ENCODE measurements at regions of chr11 and their contacts with region 1.

Region 1: DNA sequence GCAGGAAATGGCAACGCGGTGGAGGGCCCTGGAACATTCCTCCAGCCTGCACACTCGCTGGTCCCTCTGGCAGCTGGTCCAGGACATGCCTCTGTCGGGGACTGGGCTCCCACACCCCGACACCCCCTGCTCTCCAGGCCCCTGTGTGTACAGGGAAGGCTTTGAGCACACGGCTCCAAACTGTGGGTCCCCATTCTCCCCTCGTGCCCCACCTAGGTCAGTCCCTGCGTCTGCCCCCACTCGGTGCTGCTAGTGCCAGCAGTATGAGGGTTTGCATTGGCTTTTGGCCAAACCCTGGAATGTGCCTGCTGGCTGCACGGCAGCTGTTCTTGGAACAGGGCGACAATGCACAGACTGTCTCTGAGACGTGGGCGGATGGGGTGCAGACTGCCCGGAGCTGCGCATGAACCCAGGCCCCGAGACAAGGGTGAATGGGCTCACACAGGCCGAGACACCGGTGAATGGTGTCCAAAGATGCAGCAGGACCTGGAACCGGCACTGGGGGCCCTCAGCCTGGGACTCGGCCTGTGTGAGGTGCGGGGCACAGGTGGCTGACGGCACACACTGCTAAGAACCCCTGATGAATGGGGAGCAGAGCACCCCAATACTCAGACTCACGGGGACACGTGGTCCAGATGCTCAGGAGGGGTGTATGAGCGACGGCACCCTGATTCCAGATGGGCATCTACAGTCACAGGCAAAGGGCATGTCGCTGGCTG is 7.5 kb upstream of the SYT8 start:
- DNase-seq: peak; percentile 39 to 85 (median 75)
- H3K4me3 ChIP-seq: peak overlapping the region in 5 of 59 donors; percentile 1 to 23 (median 12)
- H3K27ac ChIP-seq: peak overlapping the region in 10 of 59 donors; percentile 16 to 48 (median 28)
- H3K27me3 ChIP-seq: peaks cover 0 to 13% (median 0%) of the 10 kb centered on the region in 45 donors
- CTCF ChIP-seq: peak in 2 of 56 donors; percentile 12 to 24

Region 2: GRCh38 chr11:1757861-1758610 is 69.2 kb before region 1 on chr11:
- intact Hi-C with region 1: loop called in 1 of 2 experiments (anchors 2 kb)
- DNase-seq: peak in 1 of 10 donors; percentile 45
- H3K4me3 ChIP-seq: peak overlapping the region in 6 of 59 donors; percentile 2 to 16 (median 4)
- H3K27ac ChIP-seq: peak overlapping the region in 50 of 59 donors; percentile 3 to 99 (median 94)
- H3K27me3 ChIP-seq: no peaks in the 10 kb centered on the region
- CTCF ChIP-seq: no peak

Region 3: GRCh38 chr11:2287091-2287490 is 459.8 kb after region 1 on chr11:
- intact Hi-C with region 1: no loop called
- DNase-seq: peak in 3 of 10 donors; percentile 2 to 23 (median 11)
- H3K4me3 ChIP-seq: no peak overlapping the region
- H3K27ac ChIP-seq: no peak overlapping the region
- H3K27me3 ChIP-seq: peaks cover 0 to 29% (median 0%) of the 10 kb centered on the region in 45 donors
- CTCF ChIP-seq: no peak

Measured in dorsolateral prefrontal cortex (tissue), 120 donors.